ENCODE measurements at regions of chr14 and their contacts with region 1.

Region 1: DNA sequence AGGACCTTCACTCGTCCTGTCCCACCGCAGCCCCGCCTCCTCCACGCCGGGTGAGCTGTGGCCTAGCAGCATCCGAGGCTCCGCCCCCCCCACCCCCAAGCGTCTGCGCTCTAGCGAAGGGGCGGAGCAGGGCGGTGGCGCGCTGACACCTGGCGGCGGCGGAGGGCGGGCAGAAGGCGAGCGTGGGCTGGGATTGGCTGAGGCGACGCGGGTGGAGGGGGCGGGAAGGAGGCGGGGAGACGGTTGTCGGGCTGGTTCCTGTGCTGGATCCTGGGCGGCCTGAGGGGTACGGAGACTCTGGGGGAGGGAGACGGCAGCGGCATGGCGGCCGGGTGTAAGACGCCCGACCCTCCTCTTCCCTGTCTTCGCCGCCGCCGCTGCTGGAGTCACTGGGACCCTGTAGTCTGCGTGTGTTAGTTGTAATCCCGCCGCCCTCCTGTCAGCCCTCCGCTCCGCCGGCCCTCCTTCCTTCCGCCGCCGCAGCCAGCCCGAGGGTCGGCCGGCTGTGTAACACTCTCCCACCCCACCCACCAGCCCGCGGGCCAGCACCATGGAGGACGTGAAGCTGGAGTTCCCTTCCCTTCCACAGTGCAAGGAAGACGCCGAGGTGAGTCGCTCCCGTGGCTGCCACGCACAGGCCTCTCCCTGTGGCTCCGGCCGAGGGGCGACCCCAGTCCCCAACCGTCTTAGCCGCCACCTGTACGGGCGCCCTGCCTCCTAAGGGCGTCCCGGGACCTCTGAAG is at the start of gene STYX:
- DNase-seq: peak; percentile 100
- total RNA-seq, gene STYX: 12.2 TPM

Region 2: GRCh38 chr14:52706724-52707706 is 23.1 kb before region 1 on chr14 and contains the start of gene PSMC6:
- intact Hi-C with region 1: loop called (anchors 2 kb)
- DNase-seq: peak; percentile 98
- total RNA-seq, gene PSMC6: 91.9 TPM

Region 3: DNA sequence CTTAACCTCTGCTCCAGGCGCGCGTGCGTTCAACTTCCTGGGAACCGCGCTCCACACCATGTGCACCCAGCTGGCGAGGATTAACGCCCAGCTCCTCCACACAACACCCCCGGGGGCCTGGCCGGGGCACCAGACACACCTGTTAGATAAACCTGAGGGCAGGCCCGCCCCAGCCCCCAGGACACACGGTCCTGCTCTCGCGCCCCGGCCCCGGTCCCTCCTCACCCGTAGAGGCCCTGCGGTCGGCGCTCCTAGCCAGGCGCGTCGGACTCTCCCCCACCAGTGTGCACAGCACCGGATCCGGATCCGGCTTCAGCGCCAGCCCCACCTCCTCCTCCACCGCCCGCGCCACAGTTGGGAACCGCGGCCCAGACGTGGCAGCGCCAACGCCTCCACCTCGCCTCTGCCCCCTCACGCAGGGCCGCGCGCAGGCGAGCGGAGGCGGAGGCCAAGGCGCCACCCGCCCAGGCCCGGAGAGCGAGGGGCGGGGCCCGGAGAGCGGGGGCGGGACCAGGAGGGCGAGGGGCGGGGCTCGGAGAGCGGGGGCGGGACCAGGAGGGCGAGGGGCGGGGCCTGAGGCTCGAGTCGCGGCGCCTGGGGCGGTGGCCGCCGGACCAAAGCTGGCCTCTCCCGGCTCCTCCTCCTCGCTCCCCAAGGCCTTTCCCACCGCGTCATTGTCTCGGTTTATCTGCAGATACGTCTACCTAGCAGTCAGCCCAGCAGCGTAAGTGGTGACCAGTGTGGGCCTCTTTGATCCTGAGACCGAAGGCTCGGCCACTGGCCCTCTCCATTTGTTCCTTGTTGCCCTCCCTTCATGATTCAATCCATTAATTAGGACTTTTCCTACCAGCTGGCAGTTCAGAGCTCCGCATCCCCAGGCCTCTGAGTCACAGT is 61.4 kb after region 1 on chr14 and contains the start of gene GNPNAT1:
- intact Hi-C with region 1: loop called (anchors 5 kb)
- DNase-seq: peak; percentile 92
- total RNA-seq, gene GNPNAT1: 7.7 TPM

Region 4: GRCh38 chr14:52885230-52885629 is 155.1 kb after region 1 on chr14:
- intact Hi-C with region 1: no loop called
- DNase-seq: no peak

Measured in cardiac septum (tissue), 1 donor.